ENCODE measurements at regions of chr6 and their contacts with region 1.

Region 1: DNA sequence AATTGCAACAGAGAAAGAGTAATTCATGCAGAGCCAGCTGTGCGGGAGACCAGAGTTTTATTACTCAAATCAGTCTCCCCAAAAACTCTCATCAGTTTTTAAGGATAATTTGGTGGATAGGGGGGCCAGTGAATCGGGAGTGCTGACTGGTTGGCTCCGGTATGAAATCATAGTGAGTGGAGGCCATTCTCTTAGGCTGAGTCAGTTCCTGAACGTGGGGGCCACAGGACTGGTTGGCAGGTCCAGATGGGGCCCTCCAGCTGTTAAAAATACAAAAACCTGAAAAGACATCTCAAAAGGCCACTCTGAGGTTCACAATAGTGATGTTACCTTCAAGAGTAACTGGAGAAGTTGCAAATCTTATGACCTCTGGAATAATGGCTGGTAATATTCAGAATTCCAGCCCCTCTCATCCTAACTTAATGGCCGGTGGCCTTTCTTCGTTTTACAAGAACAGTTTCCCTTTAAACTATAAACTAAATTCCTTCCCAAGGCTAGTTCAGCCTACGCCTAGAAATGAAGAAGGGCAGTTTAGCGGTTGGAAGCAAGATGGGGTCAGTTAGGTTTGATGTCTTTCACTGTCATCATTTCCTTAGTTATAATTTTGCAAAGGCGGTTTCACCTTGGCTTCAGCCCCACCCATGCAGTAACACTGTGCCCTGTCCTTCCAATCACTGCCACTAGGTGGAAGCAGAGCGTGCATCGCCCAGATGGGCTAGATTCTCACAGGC is 6.8 kb upstream of the MICA start:
- DNase-seq: peak; percentile 70 to 90 (median 84)
- ATAC-seq: peak; percentile 87
- H3K4me3 ChIP-seq: no peak overlapping the region
- H3K4me3 Mint-ChIP-seq: peak overlapping the region in 9 of 10 donors; percentile 32 to 86 (median 61)
- H3K27ac ChIP-seq: no peak overlapping the region
- H3K27ac Mint-ChIP-seq: peak overlapping the region in 6 of 9 donors; percentile 19 to 74 (median 42)
- H3K4me1 ChIP-seq: peaks cover 2 to 11% of the 10 kb centered on the region in 2 donors
- H3K4me1 Mint-ChIP-seq: peaks cover 21 to 45% (median 41%) of the 10 kb centered on the region in 7 donors
- H3K27me3 ChIP-seq: no peaks in the 10 kb centered on the region
- H3K27me3 Mint-ChIP-seq: peaks cover 0 to 4% (median 0%) of the 10 kb centered on the region in 5 donors

Region 2: GRCh38 chr6:31345026-31345730 is 51.4 kb before region 1 on chr6:
- CTCF ChIA-PET with region 1: no interaction called
- POLR2A ChIA-PET with region 1: no interaction called
- intact Hi-C with region 1: no loop called
- DNase-seq: no peak
- ATAC-seq: peak; percentile 33
- H3K4me3 ChIP-seq: no peak overlapping the region
- H3K4me3 Mint-ChIP-seq: no peak overlapping the region
- H3K27ac ChIP-seq: no peak overlapping the region
- H3K27ac Mint-ChIP-seq: peak overlapping the region in 1 of 9 donors; percentile 23
- H3K4me1 ChIP-seq: no peaks in the 10 kb centered on the region
- H3K4me1 Mint-ChIP-seq: peaks cover 0 to 21% (median 8%) of the 10 kb centered on the region in 7 donors
- H3K27me3 ChIP-seq: no peaks in the 10 kb centered on the region
- H3K27me3 Mint-ChIP-seq: peaks cover 0 to 15% (median 0%) of the 10 kb centered on the region in 5 donors

Region 3: DNA sequence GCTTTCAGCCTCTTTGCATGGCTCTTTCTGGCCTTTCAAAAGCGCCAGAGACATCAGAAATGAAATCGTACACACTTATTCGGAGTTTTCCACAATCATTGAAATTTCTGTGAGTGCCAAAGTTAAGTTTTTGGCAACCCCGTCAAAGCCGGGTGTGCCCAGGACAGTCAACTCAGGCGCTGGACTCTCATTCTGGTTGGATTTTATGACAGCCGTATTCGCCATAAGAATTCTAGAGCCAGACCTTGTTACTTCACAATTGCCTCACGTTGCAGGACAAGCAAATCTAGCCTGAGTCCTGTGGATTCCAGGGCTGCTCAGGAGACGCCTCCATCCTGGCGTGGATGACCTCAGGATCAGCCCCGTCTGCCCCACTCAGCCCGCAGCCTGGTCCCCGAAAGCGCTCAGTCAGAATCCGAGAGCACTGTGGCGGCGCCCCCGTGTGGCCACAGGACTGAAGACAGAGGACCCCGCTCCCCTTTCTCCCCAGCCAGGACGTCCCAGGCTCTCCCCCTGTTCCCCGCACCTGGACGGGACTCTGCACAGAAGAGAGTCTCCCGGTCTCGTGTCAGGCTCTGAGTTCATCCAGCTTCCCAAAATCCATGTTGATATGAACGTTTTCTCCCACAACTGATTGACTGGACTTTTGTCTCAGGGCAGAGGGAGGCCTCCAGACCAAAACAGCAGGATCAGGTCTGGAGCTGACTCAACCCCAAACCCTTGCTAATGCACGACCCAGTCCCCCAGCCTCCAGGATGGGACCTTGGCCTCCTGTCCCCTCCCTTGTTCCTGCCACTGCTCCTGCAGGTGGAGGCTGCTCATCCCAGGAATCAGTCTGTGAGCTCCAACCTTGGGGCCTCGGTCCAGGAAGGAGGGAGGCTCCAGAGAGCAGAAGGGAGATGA is 45.0 kb after region 1 on chr6:
- CTCF ChIA-PET with region 1: interaction called, 31 read pairs
- POLR2A ChIA-PET with region 1: interaction called, 16 read pairs
- intact Hi-C with region 1: loop called (anchors 1 kb)
- DNase-seq: peak; percentile 69 to 85 (median 75)
- ATAC-seq: peak; percentile 98
- H3K4me3 ChIP-seq: no peak overlapping the region
- H3K4me3 Mint-ChIP-seq: peak overlapping the region in 2 of 10 donors; percentile 13 to 32
- H3K27ac ChIP-seq: no peak overlapping the region
- H3K27ac Mint-ChIP-seq: no peak overlapping the region
- H3K4me1 ChIP-seq: no peaks in the 10 kb centered on the region
- H3K4me1 Mint-ChIP-seq: peaks cover 0 to 6% (median 4%) of the 10 kb centered on the region in 7 donors
- H3K27me3 ChIP-seq: no peaks in the 10 kb centered on the region
- H3K27me3 Mint-ChIP-seq: peaks cover 28 to 74% (median 49%) of the 10 kb centered on the region in 5 donors